Calu3 (cell line): ENCODE measurements at regions of chr7 and their contacts with region 1.

Region 1: DNA sequence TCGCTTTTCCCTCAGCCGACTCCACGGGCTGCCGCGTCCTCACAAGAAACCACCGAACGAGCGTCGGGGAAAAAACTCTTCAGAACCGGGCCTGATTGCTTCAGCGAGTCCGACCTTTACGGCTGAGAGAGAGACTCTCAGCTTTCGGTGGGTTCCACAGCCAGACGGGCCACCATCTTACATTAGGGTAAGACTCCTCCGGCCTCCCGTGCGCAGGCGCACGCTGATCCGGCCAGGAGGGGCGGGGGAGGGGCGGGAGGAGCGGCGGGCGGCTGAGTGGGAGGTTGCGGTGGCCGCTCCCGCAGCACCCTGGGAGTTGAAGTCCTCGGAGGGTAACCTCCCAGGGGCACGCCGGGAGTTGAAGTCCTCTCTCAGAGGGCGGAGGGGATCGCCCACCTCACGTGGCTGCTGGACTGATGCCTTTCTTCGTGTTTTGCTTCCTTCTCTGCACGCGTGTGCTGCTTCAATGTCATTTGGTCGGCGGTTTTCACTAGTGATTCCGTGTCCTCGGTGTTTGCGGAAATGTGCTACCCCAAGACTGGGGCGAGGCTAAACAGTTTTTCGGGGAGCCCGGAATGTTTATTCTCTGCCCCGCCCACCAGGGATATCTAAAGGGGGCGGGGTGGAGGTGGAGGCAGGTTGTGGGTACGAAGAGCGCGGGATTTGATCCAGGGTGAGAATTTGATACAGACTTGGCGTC is at the start of gene CNOT4:
- DNase-seq: peak; percentile 94
- H3K4me3 Mint-ChIP-seq: no peak within 1 kb of the TSS
- H3K27ac Mint-ChIP-seq: no peak within 1 kb of the TSS
- H3K4me1 Mint-ChIP-seq: peaks cover 7% of the 10 kb centered on the region
- H3K27me3 Mint-ChIP-seq: no peaks in the 10 kb centered on the region
- CTCF ChIP-seq: no peak
- total RNA-seq, gene CNOT4: 21.9 and 26.0 TPM in 2 replicates

Region 2: GRCh38 chr7:135281363-135281949 is 228.6 kb before region 1 on chr7:
- CTCF ChIA-PET with region 1: no interaction called
- intact Hi-C with region 1: loop called (anchors 5 kb)
- DNase-seq: peak; percentile 85
- H3K4me3 Mint-ChIP-seq: no peak overlapping the region
- H3K27ac Mint-ChIP-seq: no peak overlapping the region
- H3K4me1 Mint-ChIP-seq: no peaks in the 10 kb centered on the region
- H3K27me3 Mint-ChIP-seq: peaks cover 24% of the 10 kb centered on the region
- CTCF ChIP-seq: peak; percentile 93

Region 3: DNA sequence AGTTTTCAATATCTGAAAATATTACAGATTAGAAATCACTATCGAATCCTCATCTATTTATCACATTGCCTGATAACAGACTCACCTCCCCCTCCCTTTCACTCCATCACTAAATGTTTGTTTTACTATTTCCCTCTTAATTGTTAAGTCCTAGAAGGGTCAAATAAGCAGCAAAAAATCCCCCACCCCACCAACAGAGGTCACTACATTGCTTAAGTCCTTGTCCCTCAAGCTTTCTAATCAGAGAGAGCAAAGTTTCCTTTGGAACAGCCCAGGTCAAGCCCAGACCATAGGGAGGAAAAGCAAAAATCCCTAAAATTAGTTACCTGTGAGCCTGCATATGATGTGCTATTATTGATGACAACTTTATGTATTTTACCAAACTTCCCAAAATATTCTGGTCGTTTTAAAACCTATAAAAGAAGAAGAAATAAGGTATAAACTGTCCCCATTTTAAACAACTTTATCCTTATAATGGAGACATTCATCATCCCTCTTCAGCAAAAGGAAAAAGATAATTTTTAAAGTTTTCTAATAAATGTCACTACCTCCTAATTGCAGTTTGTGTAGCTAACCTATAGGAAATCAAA is 95.1 kb before region 1 on chr7:
- CTCF ChIA-PET with region 1: no interaction called
- intact Hi-C with region 1: loop called (anchors 2 kb)
- DNase-seq: peak; percentile 57
- H3K4me3 Mint-ChIP-seq: no peak overlapping the region
- H3K27ac Mint-ChIP-seq: no peak overlapping the region
- H3K4me1 Mint-ChIP-seq: no peaks in the 10 kb centered on the region
- H3K27me3 Mint-ChIP-seq: no peaks in the 10 kb centered on the region
- CTCF ChIP-seq: peak; percentile 58

Region 4: DNA sequence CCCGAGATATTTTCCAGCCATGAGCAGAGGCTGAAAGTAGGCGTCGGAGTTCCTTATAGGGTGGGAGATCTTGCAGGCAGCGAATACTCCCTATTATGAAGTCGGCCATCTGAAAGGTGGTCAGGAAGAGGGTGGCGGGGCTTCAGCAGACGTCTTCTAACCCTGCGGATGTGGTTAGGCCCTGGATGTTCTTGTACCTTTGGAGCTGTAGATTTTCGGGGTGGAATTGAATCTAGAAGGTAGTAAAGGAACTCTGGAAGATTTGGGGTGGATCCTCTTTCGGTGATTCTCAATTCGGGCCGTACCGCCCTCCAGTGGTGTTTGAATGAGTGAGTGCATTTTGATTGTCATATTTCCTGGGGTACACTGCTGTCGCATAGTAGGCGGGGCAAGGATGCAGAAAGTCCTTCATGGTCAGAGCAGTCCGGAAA is 48.3 kb after region 1 on chr7:
- CTCF ChIA-PET with region 1: no interaction called
- intact Hi-C with region 1: loop called (anchors 1 kb)
- DNase-seq: peak; percentile 66
- H3K4me3 Mint-ChIP-seq: no peak overlapping the region
- H3K27ac Mint-ChIP-seq: no peak overlapping the region
- H3K4me1 Mint-ChIP-seq: peaks cover 17% of the 10 kb centered on the region
- H3K27me3 Mint-ChIP-seq: no peaks in the 10 kb centered on the region
- CTCF ChIP-seq: peak; percentile 42

Region 5: DNA sequence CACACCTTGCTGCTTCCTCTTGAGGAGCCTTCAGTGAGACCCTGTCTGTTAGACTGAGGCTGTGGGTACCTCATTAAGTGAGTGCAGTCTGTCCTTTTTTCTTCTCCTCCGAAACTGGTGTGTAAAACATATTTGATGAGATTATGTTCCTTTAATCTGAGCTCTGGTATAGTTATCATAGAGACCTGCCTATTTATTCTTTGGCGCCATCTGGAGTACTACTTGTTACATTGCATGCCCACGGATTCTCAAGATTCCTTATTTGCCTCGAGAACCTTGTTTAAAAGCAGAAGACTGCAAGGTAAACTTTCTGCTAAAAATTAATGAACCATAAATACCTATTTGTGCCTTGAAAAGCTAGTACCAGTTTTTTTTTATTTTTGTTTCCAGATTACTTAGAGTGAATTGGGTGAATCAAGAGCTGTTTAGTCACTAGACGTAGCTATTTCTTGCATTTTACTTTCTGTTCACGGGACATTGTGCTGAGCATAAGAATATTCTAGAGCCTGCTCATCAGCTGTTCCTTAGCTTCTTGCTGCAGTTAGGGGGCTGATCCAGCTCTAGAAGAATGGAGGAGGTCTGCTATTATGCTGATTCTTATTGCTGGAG is 135.3 kb after region 1 on chr7:
- CTCF ChIA-PET with region 1: no interaction called
- intact Hi-C with region 1: loop called (anchors 1 kb)
- DNase-seq: peak; percentile 11
- H3K4me3 Mint-ChIP-seq: no peak overlapping the region
- H3K27ac Mint-ChIP-seq: no peak overlapping the region
- H3K4me1 Mint-ChIP-seq: no peaks in the 10 kb centered on the region
- H3K27me3 Mint-ChIP-seq: no peaks in the 10 kb centered on the region
- CTCF ChIP-seq: no peak